Naive thymus-derived CD4-positive, alpha-beta T cell (primary cell): ENCODE measurements at regions of chr10 and their contacts with region 1.

Region 1: GRCh38 chr10:102394079-102394800 is 1.3 kb upstream of the NFKB2 start:
- DNase-seq: peak; percentile 96 to 100 (median 99)
- ATAC-seq: peak; percentile 83
- H3K4me3 ChIP-seq: peak overlapping the region; percentile 78
- H3K4me3 Mint-ChIP-seq: peak overlapping the region; percentile 92 to 99 (median 96)
- H3K27ac ChIP-seq: peak overlapping the region; percentile 100
- H3K27ac Mint-ChIP-seq: peak overlapping the region; percentile 94 to 100 (median 100)
- H3K4me1 ChIP-seq: peaks cover 16 to 24% of the 10 kb centered on the region in 2 donors
- H3K4me1 Mint-ChIP-seq: peaks cover 20 to 45% (median 39%) of the 10 kb centered on the region in 7 donors
- H3K27me3 ChIP-seq: no peaks in the 10 kb centered on the region
- H3K27me3 Mint-ChIP-seq: peaks cover 0 to 4% (median 0%) of the 10 kb centered on the region in 5 donors

Region 2: GRCh38 chr10:101818119-101818871 is 575.9 kb before region 1 on chr10 and contains the start of gene OGA:
- CTCF ChIA-PET with region 1: no interaction called
- POLR2A ChIA-PET with region 1: no interaction called
- intact Hi-C with region 1: loop called in 1 of 2 experiments (anchors 5 kb)
- DNase-seq: peak; percentile 90 to 100 (median 99)
- ATAC-seq: peak; percentile 97
- H3K4me3 ChIP-seq: peak within 1 kb of the TSS; percentile 81
- H3K4me3 Mint-ChIP-seq: peak within 1 kb of the TSS; percentile 95 to 100 (median 97)
- H3K27ac ChIP-seq: peak within 1 kb of the TSS; percentile 82
- H3K27ac Mint-ChIP-seq: peak within 1 kb of the TSS; percentile 95 to 99 (median 98)
- H3K4me1 ChIP-seq: peaks cover 19 to 25% of the 10 kb centered on the region in 2 donors
- H3K4me1 Mint-ChIP-seq: peaks cover 34 to 57% (median 50%) of the 10 kb centered on the region in 7 donors
- H3K27me3 ChIP-seq: no peaks in the 10 kb centered on the region
- H3K27me3 Mint-ChIP-seq: peaks cover 0 to 4% (median 0%) of the 10 kb centered on the region in 5 donors
- total RNA-seq, gene OGA: 154 to 338 (median 321) TPM

Region 3: GRCh38 chr10:102151774-102152544 is 242.3 kb before region 1 on chr10 and contains the start of gene NOLC1:
- CTCF ChIA-PET with region 1: no interaction called
- POLR2A ChIA-PET with region 1: interaction called, 4 read pairs
- intact Hi-C with region 1: loop called (anchors 1 kb)
- DNase-seq: peak; percentile 95 to 100 (median 100)
- ATAC-seq: peak; percentile 97
- H3K4me3 ChIP-seq: peak within 1 kb of the TSS; percentile 87
- H3K4me3 Mint-ChIP-seq: peak within 1 kb of the TSS; percentile 91 to 98 (median 96)
- H3K27ac ChIP-seq: peak within 1 kb of the TSS; percentile 94
- H3K27ac Mint-ChIP-seq: peak within 1 kb of the TSS; percentile 91 to 98 (median 96)
- H3K4me1 ChIP-seq: peaks cover 11 to 16% of the 10 kb centered on the region in 2 donors
- H3K4me1 Mint-ChIP-seq: peaks cover 28 to 58% (median 43%) of the 10 kb centered on the region in 7 donors
- H3K27me3 ChIP-seq: no peaks in the 10 kb centered on the region
- H3K27me3 Mint-ChIP-seq: peaks cover 0 to 4% (median 0%) of the 10 kb centered on the region in 5 donors
- total RNA-seq, gene NOLC1: 45.1 to 98.5 (median 58.8) TPM

Region 4: DNA sequence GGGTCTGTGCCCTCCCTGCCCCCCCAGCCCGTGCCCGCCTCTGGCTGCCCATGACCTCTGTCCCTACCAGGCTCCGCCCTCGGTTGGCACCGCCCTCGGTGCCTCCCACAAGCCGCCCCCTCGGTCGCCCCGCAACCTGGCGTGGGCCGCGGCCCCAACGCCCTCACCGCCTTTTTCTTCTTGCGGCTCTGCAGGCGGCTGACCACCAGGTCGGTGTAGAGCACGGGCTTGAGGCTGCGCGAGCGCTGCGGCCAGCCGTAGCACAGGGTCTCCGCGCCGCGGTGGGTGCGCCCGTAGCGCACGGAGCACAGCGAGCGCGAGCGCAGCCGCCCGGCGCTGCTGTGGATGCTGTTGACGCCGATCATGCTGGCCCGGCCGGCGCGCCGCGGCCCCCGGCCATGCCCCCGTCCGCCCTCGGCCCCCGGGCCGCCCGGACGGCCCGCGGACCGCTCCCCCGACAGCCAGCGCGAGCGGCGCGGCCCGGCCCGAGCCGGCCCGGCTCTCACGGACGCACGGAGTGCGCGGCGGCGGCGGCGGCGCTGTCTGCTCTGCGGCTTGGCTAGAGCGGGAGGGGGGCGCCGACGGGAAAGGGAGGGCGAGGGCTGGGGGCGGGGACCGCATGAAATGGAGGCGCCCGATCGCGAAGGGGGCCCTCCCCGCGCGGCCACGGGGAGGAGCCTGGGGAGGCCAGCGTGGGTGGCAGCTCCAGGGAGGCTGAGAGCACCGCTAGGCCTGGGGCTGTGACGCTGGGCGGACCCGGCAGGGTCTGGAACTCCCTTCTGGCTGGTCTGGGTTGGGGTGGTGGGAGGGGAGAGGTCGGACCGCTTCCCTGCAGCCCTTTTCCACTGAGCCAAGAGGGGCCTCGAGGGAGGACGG is 14.7 kb after region 1 on chr10:
- CTCF ChIA-PET with region 1: interaction called, 16 read pairs
- POLR2A ChIA-PET with region 1: interaction called, 55 read pairs
- intact Hi-C with region 1: loop called (anchors 1 kb)
- DNase-seq: peak; percentile 53 to 88 (median 76)
- ATAC-seq: peak; percentile 79
- H3K4me3 ChIP-seq: peak overlapping the region; percentile 66
- H3K4me3 Mint-ChIP-seq: peak overlapping the region; percentile 73 to 91 (median 87)
- H3K27ac ChIP-seq: peak overlapping the region; percentile 72
- H3K27ac Mint-ChIP-seq: peak overlapping the region; percentile 42 to 92 (median 87)
- H3K4me1 ChIP-seq: peaks cover 5 to 36% of the 10 kb centered on the region in 2 donors
- H3K4me1 Mint-ChIP-seq: peaks cover 22 to 50% (median 42%) of the 10 kb centered on the region in 7 donors
- H3K27me3 ChIP-seq: peaks cover 0 to 12% of the 10 kb centered on the region in 2 donors
- H3K27me3 Mint-ChIP-seq: peaks cover 0 to 32% (median 18%) of the 10 kb centered on the region in 5 donors

Region 5: GRCh38 chr10:102461187-102462054 is 67.2 kb after region 1 on chr10:
- CTCF ChIA-PET with region 1: interaction called, 4 read pairs
- POLR2A ChIA-PET with region 1: interaction called, 5 read pairs
- intact Hi-C with region 1: loop called in 1 of 2 experiments (anchors 1 kb)
- DNase-seq: peak; percentile 84 to 95 (median 90)
- ATAC-seq: peak; percentile 99
- H3K4me3 ChIP-seq: peak overlapping the region; percentile 93
- H3K4me3 Mint-ChIP-seq: peak overlapping the region; percentile 83 to 96 (median 92)
- H3K27ac ChIP-seq: peak overlapping the region; percentile 74
- H3K27ac Mint-ChIP-seq: peak overlapping the region; percentile 72 to 90 (median 85)
- H3K4me1 ChIP-seq: peaks cover 9 to 14% of the 10 kb centered on the region in 2 donors
- H3K4me1 Mint-ChIP-seq: peaks cover 19 to 40% (median 34%) of the 10 kb centered on the region in 7 donors
- H3K27me3 ChIP-seq: no peaks in the 10 kb centered on the region
- H3K27me3 Mint-ChIP-seq: peaks cover 0 to 2% (median 0%) of the 10 kb centered on the region in 5 donors

Region 6: DNA sequence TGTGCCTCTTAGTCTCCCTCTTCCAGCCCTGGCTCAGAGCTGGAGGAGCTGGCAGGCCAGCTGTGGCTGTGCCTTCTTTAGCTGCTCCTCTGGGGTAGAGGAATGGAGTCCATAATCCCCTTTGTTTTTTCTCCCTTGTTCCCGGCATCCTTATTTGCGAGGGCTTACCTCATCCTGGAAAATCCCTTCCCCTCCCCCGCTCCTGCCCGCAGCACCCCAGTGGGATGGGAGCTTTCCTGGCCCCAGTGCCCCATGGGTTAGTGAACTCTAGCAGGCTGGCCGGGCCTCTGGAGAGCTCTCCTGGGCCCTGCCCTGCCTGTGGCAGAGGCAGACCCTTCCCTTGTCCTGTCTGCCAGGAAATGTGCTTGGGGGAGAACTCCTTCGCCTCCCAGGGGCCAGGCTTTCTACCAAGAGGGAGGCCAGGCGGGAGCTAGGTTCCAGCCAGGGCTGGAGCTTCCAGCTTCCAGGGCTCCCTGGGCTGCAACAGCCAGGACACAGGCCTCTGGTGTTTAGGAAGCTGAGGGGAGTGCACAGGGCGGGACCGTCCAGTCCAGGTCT is 233.6 kb after region 1 on chr10:
- CTCF ChIA-PET with region 1: no interaction called
- POLR2A ChIA-PET with region 1: no interaction called
- intact Hi-C with region 1: no loop called
- DNase-seq: no peak
- ATAC-seq: no peak
- H3K4me3 ChIP-seq: no peak overlapping the region
- H3K4me3 Mint-ChIP-seq: no peak overlapping the region
- H3K27ac ChIP-seq: no peak overlapping the region
- H3K27ac Mint-ChIP-seq: peak overlapping the region in 7 of 9 donors; percentile 31 to 69 (median 52)
- H3K4me1 ChIP-seq: peaks cover 0 to 4% of the 10 kb centered on the region in 2 donors
- H3K4me1 Mint-ChIP-seq: peaks cover 6 to 16% (median 7%) of the 10 kb centered on the region in 7 donors
- H3K27me3 ChIP-seq: no peaks in the 10 kb centered on the region
- H3K27me3 Mint-ChIP-seq: no peaks in the 10 kb centered on the region

Region 7: GRCh38 chr10:102713814-102714620 is 319.8 kb after region 1 on chr10 and contains the start of gene ARL3:
- CTCF ChIA-PET with region 1: no interaction called
- POLR2A ChIA-PET with region 1: no interaction called
- intact Hi-C with region 1: loop called (anchors 5 to 10 kb)
- DNase-seq: peak; percentile 75 to 95 (median 89)
- ATAC-seq: peak; percentile 96
- H3K4me3 ChIP-seq: peak within 1 kb of the TSS; percentile 98
- H3K4me3 Mint-ChIP-seq: peak within 1 kb of the TSS; percentile 86 to 98 (median 94)
- H3K27ac ChIP-seq: peak within 1 kb of the TSS; percentile 92
- H3K27ac Mint-ChIP-seq: peak within 1 kb of the TSS; percentile 66 to 95 (median 90)
- H3K4me1 ChIP-seq: peaks cover 4 to 18% of the 10 kb centered on the region in 2 donors
- H3K4me1 Mint-ChIP-seq: peaks cover 26 to 52% (median 43%) of the 10 kb centered on the region in 7 donors
- H3K27me3 ChIP-seq: no peaks in the 10 kb centered on the region
- H3K27me3 Mint-ChIP-seq: no peaks in the 10 kb centered on the region
- total RNA-seq, gene ARL3: 1.3 to 5.1 (median 2.9) TPM